Ovary (tissue), 10 donors: ENCODE measurements at regions of chr5 and their contacts with region 1.

Region 1: GRCh38 chr5:10452768-10453331 is 11.2 kb downstream of the ROPN1L start:
- DNase-seq: peak in 1 of 5 donors; percentile 16
- H3K4me3 ChIP-seq: no peak overlapping the region
- H3K27ac ChIP-seq: no peak overlapping the region
- H3K4me1 ChIP-seq: peaks cover 1% of the 10 kb centered on the region
- H3K27me3 ChIP-seq: no peaks in the 10 kb centered on the region
- CTCF ChIP-seq: peak in 2 of 3 donors; percentile 41 to 45
- EP300 ChIP-seq: no peak
- POLR2A ChIP-seq: no peak

Region 2: GRCh38 chr5:10627160-10627701 is 174.4 kb after region 1 on chr5:
- intact Hi-C with region 1: loop called (anchors 5 to 10 kb)
- DNase-seq: peak in 2 of 5 donors; percentile 42 to 53
- H3K4me3 ChIP-seq: peak overlapping the region; percentile 26
- H3K27ac ChIP-seq: peak overlapping the region; percentile 44 to 79
- H3K4me1 ChIP-seq: peaks cover 4% of the 10 kb centered on the region
- H3K27me3 ChIP-seq: no peaks in the 10 kb centered on the region
- CTCF ChIP-seq: no peak
- EP300 ChIP-seq: no peak
- POLR2A ChIP-seq: no peak